Naive thymus-derived CD4-positive, alpha-beta T cell (primary cell): ENCODE measurements at regions of chr13 and their contacts with region 1.

Region 1: GRCh38 chr13:41562083-41562482 is 104.7 kb downstream of the RGCC start:
- DNase-seq: no peak
- ATAC-seq: no peak
- H3K4me3 ChIP-seq: no peak overlapping the region
- H3K4me3 Mint-ChIP-seq: no peak overlapping the region
- H3K27ac ChIP-seq: no peak overlapping the region
- H3K27ac Mint-ChIP-seq: peak overlapping the region in 1 of 9 donors; percentile 26
- H3K4me1 ChIP-seq: no peaks in the 10 kb centered on the region
- H3K4me1 Mint-ChIP-seq: peaks cover 6 to 28% (median 23%) of the 10 kb centered on the region in 7 donors
- H3K27me3 ChIP-seq: no peaks in the 10 kb centered on the region
- H3K27me3 Mint-ChIP-seq: no peaks in the 10 kb centered on the region

Region 2: GRCh38 chr13:41528021-41528420 is 34.1 kb before region 1 on chr13:
- CTCF ChIA-PET with region 1: no interaction called
- POLR2A ChIA-PET with region 1: no interaction called
- intact Hi-C with region 1: loop called in 1 of 2 experiments (anchors 5 kb)
- DNase-seq: no peak
- ATAC-seq: no peak
- H3K4me3 ChIP-seq: no peak overlapping the region
- H3K4me3 Mint-ChIP-seq: no peak overlapping the region
- H3K27ac ChIP-seq: no peak overlapping the region
- H3K27ac Mint-ChIP-seq: no peak overlapping the region
- H3K4me1 ChIP-seq: no peaks in the 10 kb centered on the region
- H3K4me1 Mint-ChIP-seq: peaks cover 0 to 3% (median 0%) of the 10 kb centered on the region in 7 donors
- H3K27me3 ChIP-seq: no peaks in the 10 kb centered on the region
- H3K27me3 Mint-ChIP-seq: peaks cover 0 to 5% (median 0%) of the 10 kb centered on the region in 5 donors

Region 3: DNA sequence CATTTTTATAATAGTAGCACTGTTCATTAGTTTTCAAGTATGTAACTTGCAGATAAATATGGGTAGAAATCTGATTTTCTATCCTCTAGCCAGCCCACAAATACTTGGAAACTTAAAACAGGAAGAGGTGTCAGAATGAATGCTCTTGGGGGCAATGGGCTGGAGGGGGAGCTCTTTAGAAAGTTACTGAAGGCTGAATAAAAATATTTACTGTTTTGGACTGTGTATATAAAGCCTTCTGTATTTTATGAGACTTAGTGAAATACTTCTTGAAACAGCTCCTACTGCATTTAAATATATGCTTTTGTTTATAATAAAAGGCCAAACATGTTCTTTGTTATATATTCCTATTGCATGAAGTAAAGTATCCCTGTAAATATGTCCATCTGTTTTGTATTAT is 34.1 kb after region 1 on chr13:
- CTCF ChIA-PET with region 1: no interaction called
- POLR2A ChIA-PET with region 1: no interaction called
- intact Hi-C with region 1: no loop called
- DNase-seq: no peak
- ATAC-seq: no peak
- H3K4me3 ChIP-seq: no peak overlapping the region
- H3K4me3 Mint-ChIP-seq: no peak overlapping the region
- H3K27ac ChIP-seq: no peak overlapping the region
- H3K27ac Mint-ChIP-seq: peak overlapping the region in 1 of 9 donors; percentile 41
- H3K4me1 ChIP-seq: no peaks in the 10 kb centered on the region
- H3K4me1 Mint-ChIP-seq: peaks cover 5 to 21% (median 9%) of the 10 kb centered on the region in 7 donors
- H3K27me3 ChIP-seq: no peaks in the 10 kb centered on the region
- H3K27me3 Mint-ChIP-seq: no peaks in the 10 kb centered on the region

Region 4: DNA sequence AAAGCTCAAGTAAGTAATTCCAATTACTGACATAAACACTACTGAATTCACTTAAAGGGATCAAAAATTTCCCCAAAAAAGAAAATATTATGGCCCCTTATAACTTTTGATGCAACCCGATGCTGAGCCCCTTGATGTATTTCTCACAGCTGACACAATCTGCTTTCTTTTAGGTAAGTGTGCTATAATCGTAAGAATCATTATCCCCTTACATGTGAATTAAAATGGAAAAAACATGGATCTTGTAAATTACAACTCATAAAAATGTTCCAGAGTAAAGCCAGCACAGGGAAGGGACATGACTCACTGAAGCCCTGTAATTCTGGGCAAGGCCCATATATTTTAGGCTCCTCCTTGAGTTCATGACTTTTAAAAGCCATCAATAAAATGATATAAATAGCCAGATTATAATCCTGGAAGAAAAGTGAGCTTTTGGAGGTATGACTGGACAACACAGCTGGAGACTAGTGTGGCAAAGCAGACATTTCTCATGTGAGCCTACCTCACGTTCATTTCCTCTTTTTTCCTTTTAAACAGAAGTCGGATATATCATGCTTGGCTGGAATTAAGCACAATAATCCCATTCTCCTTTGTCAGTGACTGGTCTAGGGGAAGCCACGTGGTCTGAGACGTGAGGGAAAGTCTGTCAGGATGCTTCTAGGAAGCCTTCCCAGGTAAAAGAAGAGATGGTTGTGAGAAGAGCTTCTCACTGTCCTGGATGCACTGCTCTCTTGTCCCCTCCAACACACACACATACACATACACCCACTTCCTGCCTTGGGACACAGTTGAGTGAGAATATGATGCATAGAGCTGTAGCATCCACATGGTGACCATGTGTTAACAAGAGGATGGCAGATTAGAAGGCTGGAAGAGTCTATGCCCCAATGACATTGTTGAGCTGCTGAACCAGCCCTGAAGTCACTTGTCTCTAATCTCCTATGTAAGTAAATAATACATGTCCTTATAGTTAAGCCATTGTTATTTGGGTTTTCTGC is 60.6 kb after region 1 on chr13:
- CTCF ChIA-PET with region 1: no interaction called
- POLR2A ChIA-PET with region 1: no interaction called
- intact Hi-C with region 1: loop called in 1 of 2 experiments (anchors 5 kb)
- DNase-seq: no peak
- ATAC-seq: no peak
- H3K4me3 ChIP-seq: no peak overlapping the region
- H3K4me3 Mint-ChIP-seq: no peak overlapping the region
- H3K27ac ChIP-seq: no peak overlapping the region
- H3K27ac Mint-ChIP-seq: no peak overlapping the region
- H3K4me1 ChIP-seq: no peaks in the 10 kb centered on the region
- H3K4me1 Mint-ChIP-seq: peaks cover 0 to 4% (median 0%) of the 10 kb centered on the region in 7 donors
- H3K27me3 ChIP-seq: no peaks in the 10 kb centered on the region
- H3K27me3 Mint-ChIP-seq: no peaks in the 10 kb centered on the region